Thyroid gland (tissue), 4 donors: ENCODE measurements at regions of chr15 and their contacts with region 1.

Region 1: DNA sequence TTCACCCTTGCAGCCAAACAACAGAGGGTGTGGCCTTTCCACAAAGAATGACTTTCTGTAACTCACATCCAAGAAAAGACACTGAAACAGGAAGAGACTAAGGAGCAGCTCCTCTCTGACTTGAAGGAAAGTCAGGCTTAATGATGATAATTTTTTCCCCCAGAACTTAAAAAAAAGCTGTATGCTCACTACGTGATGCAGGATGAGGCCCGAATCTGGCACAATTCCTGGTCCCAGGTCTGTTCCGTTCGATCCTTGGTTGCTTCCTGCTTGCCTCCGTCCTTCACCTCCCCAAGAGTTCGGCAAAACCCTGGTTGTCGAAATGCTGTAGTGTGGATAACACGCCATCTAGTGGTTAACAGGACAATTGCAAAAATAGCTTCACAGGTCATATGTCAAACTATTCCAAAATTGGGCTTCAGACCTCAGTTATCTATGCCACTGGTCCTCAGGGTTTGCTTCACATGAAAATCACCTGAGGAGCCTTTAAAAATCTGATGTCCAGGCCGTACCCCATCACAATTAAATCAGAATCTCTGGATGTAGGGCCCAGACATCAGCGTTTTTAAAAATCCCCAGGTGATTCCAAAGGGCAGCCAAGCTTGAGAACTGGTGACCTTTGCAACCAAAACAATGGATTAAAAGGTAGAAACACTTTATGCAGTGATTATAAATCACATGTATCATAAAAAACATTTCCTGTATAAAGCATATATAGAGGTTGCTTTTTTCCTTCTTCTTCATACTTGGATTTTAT is 28.1 kb upstream of the SYNM start:
- DNase-seq: peak; percentile 65 to 67
- H3K4me3 ChIP-seq: peak overlapping the region in 1 of 3 donors; percentile 11
- H3K27ac ChIP-seq: peak overlapping the region in 1 of 3 donors; percentile 47
- H3K4me1 ChIP-seq: no peaks in the 10 kb centered on the region
- H3K27me3 ChIP-seq: no peaks in the 10 kb centered on the region
- CTCF ChIP-seq: peak; percentile 43 to 93 (median 86)
- POLR2A ChIP-seq: no peak

Region 2: DNA sequence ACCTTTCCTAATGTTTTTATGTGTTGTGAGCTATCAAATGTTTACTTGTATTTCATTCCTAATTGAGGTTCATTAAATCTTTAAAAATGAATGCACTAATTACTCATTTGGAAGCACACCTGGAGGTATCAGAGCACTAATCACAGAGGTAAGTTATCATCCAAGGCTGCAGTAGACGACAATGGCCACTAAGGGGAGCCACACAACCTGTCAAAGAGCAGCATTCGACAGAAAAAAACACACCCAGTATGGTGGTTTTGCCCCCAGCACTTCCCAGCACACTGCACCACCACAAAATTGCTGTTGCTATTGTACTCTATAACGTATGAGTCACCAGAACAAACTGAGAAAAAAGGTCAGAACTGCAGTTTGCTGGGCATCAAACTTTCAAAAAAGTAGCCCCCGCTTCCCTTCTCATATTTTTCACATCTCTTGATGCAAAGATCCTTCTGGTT is 634.3 kb before region 1 on chr15:
- intact Hi-C with region 1: loop called (anchors 10 kb)
- DNase-seq: peak; percentile 59 to 68
- H3K4me3 ChIP-seq: no peak overlapping the region
- H3K27ac ChIP-seq: no peak overlapping the region
- H3K4me1 ChIP-seq: no peaks in the 10 kb centered on the region
- H3K27me3 ChIP-seq: no peaks in the 10 kb centered on the region
- CTCF ChIP-seq: peak; percentile 62 to 81 (median 73)
- POLR2A ChIP-seq: no peak

Region 3: DNA sequence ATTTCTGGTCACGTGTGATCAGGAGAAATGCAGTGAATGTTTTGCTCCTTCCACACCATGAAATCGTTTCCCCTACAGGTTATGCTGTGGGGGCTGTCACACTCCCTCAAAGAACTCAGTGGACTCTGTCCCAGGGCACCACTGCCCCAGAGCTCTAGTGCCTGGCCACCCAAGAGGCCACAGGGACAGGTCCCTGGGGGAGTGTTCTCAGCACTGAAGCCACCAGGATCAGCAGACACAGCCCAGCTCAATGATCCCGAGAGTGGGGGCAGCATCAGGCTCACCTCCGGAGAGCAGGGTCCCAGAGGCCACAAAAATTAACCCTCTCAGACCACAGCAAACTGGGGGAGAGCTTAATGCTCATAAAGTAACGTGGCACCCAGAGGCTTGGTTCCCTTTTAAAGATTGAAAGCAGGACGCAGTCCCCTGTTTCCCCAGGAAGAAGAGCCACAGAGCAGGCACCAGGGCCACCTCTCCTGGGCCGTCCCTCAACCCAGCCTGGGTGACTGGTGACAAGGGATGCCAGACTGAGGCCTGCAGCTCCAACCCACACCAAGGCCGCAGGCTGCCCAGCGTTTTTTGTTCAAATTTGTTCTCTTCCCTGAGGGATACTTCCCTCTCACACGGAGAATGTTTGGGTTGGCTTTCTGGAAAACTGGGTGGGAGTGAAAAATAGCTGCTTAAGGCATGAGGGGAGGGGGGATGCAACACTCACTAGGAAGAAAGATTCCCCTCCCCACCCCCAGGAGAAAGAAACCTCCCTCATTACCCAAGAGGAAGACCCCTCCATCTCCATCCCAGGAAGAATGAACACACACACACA is 551.7 kb before region 1 on chr15:
- intact Hi-C with region 1: loop called (anchors 5 kb)
- DNase-seq: no peak
- H3K4me3 ChIP-seq: no peak overlapping the region
- H3K27ac ChIP-seq: no peak overlapping the region
- H3K4me1 ChIP-seq: no peaks in the 10 kb centered on the region
- H3K27me3 ChIP-seq: no peaks in the 10 kb centered on the region
- CTCF ChIP-seq: no peak
- POLR2A ChIP-seq: no peak

Region 4: DNA sequence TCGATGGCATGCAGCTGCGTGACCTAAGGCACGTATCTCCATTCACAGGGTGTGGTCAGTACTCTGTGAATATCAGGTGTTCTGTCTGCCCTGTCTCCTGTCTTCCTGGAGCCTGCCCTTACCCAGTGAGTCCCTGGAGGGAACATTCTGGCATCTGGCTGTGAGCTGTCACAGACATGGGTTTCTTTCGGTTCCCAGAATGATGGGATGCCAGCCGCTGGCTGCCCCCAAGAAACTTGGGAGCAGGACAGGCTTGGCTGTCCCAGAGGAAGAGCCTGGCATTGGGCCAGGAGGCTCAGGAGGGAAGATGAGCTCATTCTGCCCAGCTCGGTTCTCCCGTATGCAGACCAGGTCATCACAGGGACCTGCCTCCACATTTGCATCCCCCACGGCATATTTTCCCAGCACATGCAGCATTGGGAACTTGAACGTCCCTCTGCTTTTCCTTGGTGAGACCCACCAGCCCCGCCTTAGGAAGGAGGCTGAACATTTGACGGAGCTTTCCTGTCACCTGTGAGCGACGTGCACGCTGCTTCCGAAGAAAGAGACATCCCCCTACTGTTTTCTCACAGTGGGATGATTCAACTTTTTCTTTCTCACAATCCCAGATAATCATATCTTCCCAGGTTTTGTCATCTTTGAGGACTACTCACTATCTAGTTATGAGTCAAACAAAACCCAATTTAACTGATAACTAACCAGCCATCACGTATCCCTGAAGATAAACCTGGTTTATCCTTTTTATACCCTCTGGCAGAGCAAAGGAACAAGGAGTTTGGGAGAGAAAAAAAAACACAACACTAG is 47.2 kb before region 1 on chr15:
- intact Hi-C with region 1: no loop called
- DNase-seq: no peak
- H3K4me3 ChIP-seq: no peak overlapping the region
- H3K27ac ChIP-seq: no peak overlapping the region
- H3K4me1 ChIP-seq: no peaks in the 10 kb centered on the region
- H3K27me3 ChIP-seq: no peaks in the 10 kb centered on the region
- CTCF ChIP-seq: no peak
- POLR2A ChIP-seq: no peak